ENCODE measurements at regions of chr2 and their contacts with region 1.

Region 1: DNA sequence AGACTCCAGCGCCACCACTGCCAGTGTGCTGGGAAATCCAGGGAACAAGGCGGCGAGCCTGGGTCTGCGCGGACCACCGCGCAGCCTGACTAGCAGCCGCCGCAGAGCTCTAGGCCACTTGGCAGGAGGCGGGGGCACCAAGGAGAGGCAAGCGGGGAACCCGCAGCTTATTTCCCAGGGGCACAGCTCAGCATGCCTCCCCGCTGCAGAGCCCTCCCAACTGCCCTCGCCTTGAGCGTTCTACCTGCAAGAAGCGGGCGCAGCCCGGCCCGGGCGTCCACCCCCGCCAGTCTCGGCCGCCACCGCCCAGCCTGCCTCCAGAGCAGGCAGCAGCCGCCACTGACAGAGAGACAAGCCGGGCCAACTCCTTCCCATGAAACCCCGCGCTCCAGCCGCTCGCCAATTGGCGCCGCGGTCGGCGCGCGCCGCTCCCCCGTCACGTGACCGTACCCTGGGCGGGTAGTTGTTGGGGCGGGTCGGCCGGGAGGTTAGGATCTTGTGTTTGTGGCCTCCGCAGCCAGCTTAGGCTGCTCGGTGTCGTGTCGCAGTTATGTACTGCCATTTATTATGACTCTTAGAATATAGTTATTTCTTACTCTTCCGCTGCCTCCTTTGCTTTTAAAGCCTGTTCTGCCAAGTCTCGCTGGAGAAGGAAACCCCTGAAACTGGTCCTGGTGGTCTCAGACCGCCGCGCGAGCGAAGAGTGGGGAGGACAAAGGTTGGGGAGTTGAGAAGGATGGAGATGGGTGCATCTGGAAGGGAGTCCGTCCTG is at the start of gene LNPK:
- DNase-seq: peak; percentile 89
- H3K4me3 ChIP-seq: peak within 1 kb of the TSS; percentile 85 to 90 (median 88)
- H3K27ac ChIP-seq: peak within 1 kb of the TSS; percentile 72
- H3K4me1 ChIP-seq: peaks cover 8% of the 10 kb centered on the region
- H3K27me3 ChIP-seq: no peaks in the 10 kb centered on the region
- CTCF ChIP-seq: no peak
- total RNA-seq, gene LNPK: 34.7 to 47.7 TPM

Region 2: DNA sequence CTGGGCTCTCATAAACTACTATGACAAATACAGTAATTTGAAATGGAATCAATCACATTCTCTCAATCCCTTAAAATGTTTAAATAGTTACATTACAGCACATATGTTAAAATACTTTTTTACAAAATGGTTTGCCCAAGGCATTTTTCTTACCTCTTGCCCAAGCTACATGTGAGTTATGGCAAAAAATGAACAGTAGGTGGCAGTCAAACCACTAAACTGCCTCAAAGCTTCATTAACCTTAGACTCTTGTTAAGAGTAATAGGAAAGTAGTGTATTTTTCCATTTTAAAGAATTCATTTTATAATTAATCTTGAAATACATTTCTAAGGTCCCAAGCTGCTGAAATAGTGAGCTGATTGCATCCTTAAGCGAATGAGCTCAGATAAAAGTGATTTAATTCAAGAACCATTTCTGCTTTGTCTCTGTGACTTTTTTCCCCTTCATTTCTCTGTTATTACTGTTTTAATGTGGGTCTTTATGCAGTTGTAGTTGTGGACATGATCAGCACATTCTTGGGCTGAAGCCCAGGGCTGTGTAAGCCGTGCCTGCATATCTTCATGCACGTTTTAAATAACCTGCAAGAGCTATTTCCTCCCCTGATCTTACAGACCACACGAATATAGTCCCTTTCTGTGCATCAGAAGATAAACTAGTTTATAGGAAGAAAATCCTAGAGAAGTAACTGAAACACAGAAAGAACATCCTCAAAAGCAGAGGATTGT is 311.8 kb before region 1 on chr2:
- CTCF ChIA-PET with region 1: no interaction called
- dilution Hi-C with region 1: no loop called
- in situ Hi-C with region 1: no loop called
- intact Hi-C with region 1: loop called (anchors 1 kb)
- DNase-seq: peak; percentile 49
- H3K4me3 ChIP-seq: no peak overlapping the region
- H3K27ac ChIP-seq: no peak overlapping the region
- H3K4me1 ChIP-seq: no peaks in the 10 kb centered on the region
- H3K27me3 ChIP-seq: peaks cover 7% of the 10 kb centered on the region
- CTCF ChIP-seq: peak; percentile 69 to 78

Region 3: DNA sequence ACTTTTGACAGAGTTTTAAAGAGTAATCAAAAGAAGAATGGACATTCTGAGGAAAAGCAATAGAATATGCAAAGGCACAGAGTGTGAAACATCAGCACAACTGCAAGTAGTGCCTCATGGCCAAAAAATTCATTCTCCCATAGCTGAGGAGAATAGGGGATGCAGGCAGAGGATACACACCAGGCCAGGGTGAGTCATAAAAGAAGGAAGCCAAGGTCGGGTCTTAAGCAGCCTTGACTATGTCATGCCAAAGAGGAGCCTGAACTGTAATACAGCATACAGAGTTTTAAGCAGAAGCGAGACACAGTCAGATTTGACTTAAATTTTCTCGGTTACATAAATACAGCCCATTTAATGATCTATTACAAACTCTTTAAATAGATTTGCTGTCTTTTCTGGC is 165.1 kb before region 1 on chr2:
- CTCF ChIA-PET with region 1: no interaction called
- dilution Hi-C with region 1: no loop called
- in situ Hi-C with region 1: no loop called
- intact Hi-C with region 1: loop called (anchors 10 kb)
- DNase-seq: peak; percentile 23
- H3K4me3 ChIP-seq: no peak overlapping the region
- H3K27ac ChIP-seq: no peak overlapping the region
- H3K4me1 ChIP-seq: no peaks in the 10 kb centered on the region
- H3K27me3 ChIP-seq: no peaks in the 10 kb centered on the region
- CTCF ChIP-seq: no peak